A549 (cell line): ENCODE measurements at regions of chr12 and their contacts with region 1.

Region 1: DNA sequence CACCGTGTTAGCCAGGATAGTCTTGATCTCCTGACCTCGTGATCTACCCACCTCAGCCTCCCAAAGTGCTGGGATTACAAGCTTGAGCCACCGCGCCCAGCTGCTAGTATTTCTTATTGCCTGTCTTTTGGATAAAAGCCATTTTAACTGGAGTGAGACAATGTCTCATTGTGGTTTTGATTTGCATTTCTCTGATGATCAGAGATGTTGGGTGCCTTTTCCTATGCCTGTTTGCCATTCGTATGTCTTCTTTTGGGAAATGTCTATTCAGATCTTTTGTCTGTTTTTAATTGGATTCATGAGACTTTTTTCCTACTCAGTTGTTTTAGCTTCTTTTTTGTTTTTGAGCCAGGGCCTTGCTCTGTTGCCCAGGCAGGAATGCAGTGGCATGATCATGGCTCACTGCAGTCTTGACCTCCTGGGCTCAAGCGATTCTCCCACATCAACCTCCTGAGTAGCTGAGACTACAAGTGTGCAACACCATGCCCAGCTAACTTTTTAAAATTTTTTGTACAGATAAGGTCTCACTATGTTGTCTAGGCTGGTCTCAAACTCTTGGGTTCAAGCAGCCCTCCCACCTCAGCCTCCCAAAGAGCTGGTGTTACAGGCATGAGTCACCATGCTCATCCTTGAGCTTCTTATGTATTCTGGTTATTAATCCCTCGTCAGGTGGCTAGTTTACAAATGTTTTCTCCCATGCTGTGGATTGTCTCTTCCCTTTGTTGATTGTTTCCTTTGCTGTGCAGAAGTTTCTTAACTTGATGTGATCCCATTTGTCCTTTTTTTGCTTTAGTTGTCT is 65.9 kb downstream of the ACACB start:
- DNase-seq: no peak
- ATAC-seq: no peak
- H3K4me3 ChIP-seq: no peak overlapping the region
- H3K27ac ChIP-seq: no peak overlapping the region
- H3K4me1 ChIP-seq: peaks cover 5% of the 10 kb centered on the region; the same call in 1 of the 3 replicates
- CTCF ChIP-seq: no peak
- EP300 ChIP-seq: no peak
- POLR2A ChIP-seq: no peak
- RAD21 ChIP-seq: no peak

Region 2: GRCh38 chr12:109165599-109165998 is 16.6 kb before region 1 on chr12:
- CTCF ChIA-PET with region 1: no interaction called
- POLR2A ChIA-PET with region 1: no interaction called
- DNase-seq: no peak
- ATAC-seq: no peak
- H3K4me3 ChIP-seq: no peak overlapping the region
- H3K27ac ChIP-seq: no peak overlapping the region
- H3K4me1 ChIP-seq: no peaks in the 10 kb centered on the region
- CTCF ChIP-seq: no peak
- EP300 ChIP-seq: no peak
- POLR2A ChIP-seq: no peak
- RAD21 ChIP-seq: no peak

Region 3: DNA sequence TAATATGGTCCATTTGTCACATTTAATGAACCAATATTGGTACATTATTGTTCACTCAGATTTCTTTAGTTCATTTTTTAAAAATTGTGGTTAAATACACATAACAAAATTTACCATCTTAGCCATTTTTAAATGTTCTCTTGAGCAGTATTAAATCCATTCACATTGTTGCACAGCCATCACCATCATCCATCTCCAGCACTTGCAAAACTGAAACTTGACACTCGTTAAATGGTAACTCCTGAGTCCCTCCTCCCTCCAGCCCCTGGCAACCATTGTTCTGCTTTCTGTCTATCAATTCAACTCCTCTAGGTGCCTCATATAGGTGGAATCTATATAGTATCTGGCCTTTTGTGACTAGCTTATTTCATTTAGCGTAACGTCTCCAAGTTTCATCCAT is 20.5 kb after region 1 on chr12:
- CTCF ChIA-PET with region 1: no interaction called
- POLR2A ChIA-PET with region 1: interaction called, 10 read pairs
- DNase-seq: no peak
- ATAC-seq: no peak
- H3K4me3 ChIP-seq: no peak overlapping the region
- H3K27ac ChIP-seq: no peak overlapping the region
- H3K4me1 ChIP-seq: peaks cover 17% of the 10 kb centered on the region
- CTCF ChIP-seq: no peak
- EP300 ChIP-seq: no peak
- POLR2A ChIP-seq: no peak
- RAD21 ChIP-seq: no peak